ENCODE measurements at regions of chr17 and their contacts with region 1.

Region 1: GRCh38 chr17:57604771-57605674 is 140.1 kb downstream of the CCDC182 start:
- DNase-seq: no peak
- H3K4me3 ChIP-seq: peak overlapping the region; percentile 12 to 39 (median 34)
- H3K27ac ChIP-seq: peak overlapping the region; percentile 59 to 80 (median 69)
- H3K4me1 ChIP-seq: peaks cover 23 to 30% (median 26%) of the 10 kb centered on the region in 4 donors
- H3K27me3 ChIP-seq: no peaks in the 10 kb centered on the region
- CTCF ChIP-seq: no peak
- EP300 ChIP-seq: no peak
- POLR2A ChIP-seq: no peak

Region 2: DNA sequence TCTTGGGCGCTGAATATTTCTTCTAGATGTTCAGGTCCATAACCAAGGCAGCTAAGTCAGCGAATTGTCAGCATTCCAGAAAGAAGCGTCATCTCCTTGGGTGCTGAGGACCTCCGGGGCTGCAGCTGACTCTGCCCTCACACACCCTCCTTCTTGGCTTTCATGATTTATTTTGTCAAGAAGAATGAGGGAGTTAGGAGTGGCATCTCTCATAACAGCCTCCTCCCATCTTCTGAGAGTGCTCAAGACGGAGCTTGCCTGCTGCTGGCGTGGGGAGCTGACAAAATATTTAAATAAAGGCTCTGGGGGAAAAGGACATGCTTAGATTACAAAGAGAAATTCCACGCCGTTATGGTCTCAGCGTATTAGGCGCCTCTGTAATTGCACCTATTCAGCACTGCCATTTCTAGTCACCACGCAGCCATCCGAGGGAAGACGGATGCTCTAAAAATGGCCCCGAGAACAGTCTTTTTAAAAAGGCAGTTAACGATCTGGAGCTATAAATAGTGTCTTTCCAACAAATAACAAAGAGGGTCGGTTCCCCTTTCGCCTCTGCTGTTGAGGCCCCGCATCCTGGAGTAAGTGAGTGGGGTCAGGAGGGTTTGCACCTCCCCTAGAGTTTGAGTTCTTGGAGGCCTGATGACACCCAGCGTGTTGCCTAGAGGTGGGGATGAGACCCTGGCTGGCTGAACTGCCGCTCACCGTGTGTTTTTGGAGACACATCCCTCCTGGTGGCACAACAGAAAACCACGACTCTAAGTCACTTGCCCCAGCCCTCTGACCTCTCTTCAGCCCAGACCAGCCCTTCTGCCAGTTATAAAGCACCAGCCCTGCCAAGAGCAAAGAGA is 47.0 kb before region 1 on chr17:
- intact Hi-C with region 1: no loop called
- DNase-seq: no peak
- H3K4me3 ChIP-seq: no peak overlapping the region
- H3K27ac ChIP-seq: no peak overlapping the region
- H3K4me1 ChIP-seq: peaks cover 15 to 31% (median 26%) of the 10 kb centered on the region in 4 donors
- H3K27me3 ChIP-seq: no peaks in the 10 kb centered on the region
- CTCF ChIP-seq: no peak
- EP300 ChIP-seq: no peak
- POLR2A ChIP-seq: no peak

Region 3: GRCh38 chr17:57657201-57657600 is 52.2 kb after region 1 on chr17:
- intact Hi-C with region 1: loop called (anchors 5 kb)
- DNase-seq: no peak
- H3K4me3 ChIP-seq: no peak overlapping the region
- H3K27ac ChIP-seq: no peak overlapping the region
- H3K4me1 ChIP-seq: peaks cover 5 to 9% (median 7%) of the 10 kb centered on the region in 4 donors
- H3K27me3 ChIP-seq: no peaks in the 10 kb centered on the region
- CTCF ChIP-seq: no peak
- EP300 ChIP-seq: no peak
- POLR2A ChIP-seq: no peak

Measured in esophagus muscularis mucosa (tissue), 4 donors.